Calu3 (cell line): ENCODE measurements at regions of chr3 and their contacts with region 1.

Region 1: GRCh38 chr3:121295966-121296365 is 249.8 kb downstream of the POLQ start:
- DNase-seq: no peak
- H3K4me3 Mint-ChIP-seq: no peak overlapping the region
- H3K27ac Mint-ChIP-seq: no peak overlapping the region
- H3K4me1 Mint-ChIP-seq: no peaks in the 10 kb centered on the region
- H3K27me3 Mint-ChIP-seq: peaks cover 21% of the 10 kb centered on the region
- CTCF ChIP-seq: no peak

Region 2: GRCh38 chr3:121274411-121274810 is 21.6 kb before region 1 on chr3:
- CTCF ChIA-PET with region 1: no interaction called
- intact Hi-C with region 1: loop called (anchors 1 kb)
- DNase-seq: no peak
- H3K4me3 Mint-ChIP-seq: no peak overlapping the region
- H3K27ac Mint-ChIP-seq: no peak overlapping the region
- H3K4me1 Mint-ChIP-seq: no peaks in the 10 kb centered on the region
- H3K27me3 Mint-ChIP-seq: no peaks in the 10 kb centered on the region
- CTCF ChIP-seq: no peak